Endothelial cell of umbilical vein (primary cell): ENCODE measurements at regions of chr14 and their contacts with region 1.

Region 1: DNA sequence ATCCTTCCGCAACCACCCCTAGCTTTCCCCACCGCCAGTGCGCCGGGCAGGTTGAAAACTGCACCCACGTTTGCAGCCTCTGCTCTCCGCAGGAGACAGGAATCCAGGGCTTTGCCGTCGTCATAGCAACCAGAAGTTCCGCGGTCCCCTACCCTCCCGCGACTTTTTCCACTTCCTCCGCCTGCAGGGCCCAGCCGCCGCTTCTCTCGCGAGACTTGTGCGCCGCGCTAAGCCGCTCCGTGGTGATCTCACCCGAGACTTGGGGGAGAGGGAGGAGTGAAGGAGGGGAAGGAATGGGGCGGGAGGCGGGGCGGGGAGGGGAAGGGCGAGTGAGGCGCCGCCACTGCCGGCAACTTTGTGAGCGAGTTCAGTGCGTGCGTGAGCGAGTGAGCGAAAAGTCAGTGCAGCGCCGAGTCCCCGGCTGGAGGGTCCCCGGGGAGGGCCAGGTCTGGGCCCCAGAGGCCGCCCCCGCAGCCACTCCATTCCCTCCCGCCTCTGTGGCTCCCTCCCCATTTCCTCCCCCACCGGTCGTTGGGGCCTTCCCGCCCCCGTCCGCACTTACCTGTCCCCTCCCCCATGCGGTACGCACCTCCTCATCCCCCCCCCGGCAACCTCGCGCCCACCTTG is 413.0 kb downstream of the PCNX1 start:
- DNase-seq: peak; percentile 99
- H3K4me3 ChIP-seq: peak within 1 kb of the TSS; percentile 78 to 94 (median 89)
- H3K27ac ChIP-seq: peak within 1 kb of the TSS; percentile 74
- H3K4me1 ChIP-seq: peaks cover 11% of the 10 kb centered on the region
- H3K27me3 ChIP-seq: no peaks in the 10 kb centered on the region
- CTCF ChIP-seq: no peak
- POLR2A ChIP-seq: peak; percentile 91

Region 2: DNA sequence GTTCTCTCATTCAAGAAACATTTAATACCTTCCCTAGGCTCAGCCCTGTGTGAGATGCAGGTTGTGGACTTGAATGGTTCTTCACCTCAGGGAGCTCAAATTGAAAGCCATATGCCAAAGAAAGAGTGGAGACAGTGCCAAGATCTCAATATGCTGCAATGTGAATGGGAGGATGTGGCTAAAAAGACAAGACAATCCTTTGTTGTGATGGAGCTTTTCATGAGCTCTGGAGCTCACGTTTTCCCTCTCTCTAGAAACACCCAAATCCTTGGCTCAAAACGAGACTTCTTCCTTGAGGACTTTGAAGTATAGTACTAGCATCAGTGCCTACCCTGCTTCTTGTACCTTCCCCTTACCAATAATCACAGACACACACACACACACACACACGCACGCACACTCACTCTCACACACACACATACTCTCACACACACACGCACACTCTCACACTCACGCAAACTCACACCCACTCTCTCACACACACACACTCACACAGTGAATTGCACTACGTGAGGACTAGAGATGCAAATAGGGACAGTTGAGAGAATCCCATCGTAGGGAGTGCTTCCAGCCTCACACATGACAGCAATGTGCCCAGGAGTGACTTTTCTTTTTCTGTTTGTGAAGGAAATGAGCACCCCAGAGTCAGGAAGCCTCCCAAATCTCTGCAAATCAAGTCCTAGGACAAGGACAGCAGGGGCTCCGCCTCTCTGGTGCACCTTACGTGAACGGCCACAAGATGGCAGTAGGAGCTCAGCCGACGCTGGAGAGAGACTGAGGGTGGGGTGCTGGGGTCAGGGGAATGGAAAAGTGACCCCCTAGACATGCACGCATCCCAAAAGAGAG is 181.5 kb before region 1 on chr14:
- CTCF ChIA-PET with region 1: interaction called, 14 read pairs
- POLR2A ChIA-PET with region 1: no interaction called
- dilution Hi-C with region 1: no loop called
- intact Hi-C with region 1: loop called (anchors 1 kb)
- DNase-seq: peak; percentile 46
- H3K4me3 ChIP-seq: no peak overlapping the region
- H3K27ac ChIP-seq: no peak overlapping the region
- H3K4me1 ChIP-seq: peaks cover 15% of the 10 kb centered on the region
- H3K27me3 ChIP-seq: no peaks in the 10 kb centered on the region
- CTCF ChIP-seq: peak; percentile 85 to 90
- POLR2A ChIP-seq: no peak

Region 3: DNA sequence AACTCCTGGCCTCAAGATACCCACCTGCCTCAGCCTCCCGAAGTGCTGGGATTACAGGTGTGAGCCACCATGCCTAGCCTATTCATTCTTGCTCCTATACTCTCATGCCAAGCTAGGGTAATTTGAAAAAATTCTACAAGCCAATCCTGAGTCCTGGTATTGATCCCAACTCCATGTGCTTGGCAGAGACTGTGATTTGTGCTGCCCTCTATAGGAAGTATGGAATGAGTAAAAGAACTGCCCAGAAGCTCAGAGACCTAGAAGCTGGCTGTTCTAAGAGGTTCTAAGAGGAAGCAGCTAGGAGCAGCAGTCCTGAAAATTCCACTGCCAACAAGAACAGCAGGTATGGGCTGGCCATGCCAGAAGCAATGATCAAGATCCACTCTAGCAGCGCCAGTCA is 10.5 kb before region 1 on chr14:
- CTCF ChIA-PET with region 1: interaction called, 11 read pairs
- POLR2A ChIA-PET with region 1: no interaction called
- dilution Hi-C with region 1: no loop called
- intact Hi-C with region 1: no loop called
- DNase-seq: no peak
- H3K4me3 ChIP-seq: no peak overlapping the region
- H3K27ac ChIP-seq: no peak overlapping the region
- H3K4me1 ChIP-seq: no peaks in the 10 kb centered on the region
- H3K27me3 ChIP-seq: peaks cover 6 to 14% of the 10 kb centered on the region in 2 experiments
- CTCF ChIP-seq: no peak
- POLR2A ChIP-seq: no peak

Region 4: DNA sequence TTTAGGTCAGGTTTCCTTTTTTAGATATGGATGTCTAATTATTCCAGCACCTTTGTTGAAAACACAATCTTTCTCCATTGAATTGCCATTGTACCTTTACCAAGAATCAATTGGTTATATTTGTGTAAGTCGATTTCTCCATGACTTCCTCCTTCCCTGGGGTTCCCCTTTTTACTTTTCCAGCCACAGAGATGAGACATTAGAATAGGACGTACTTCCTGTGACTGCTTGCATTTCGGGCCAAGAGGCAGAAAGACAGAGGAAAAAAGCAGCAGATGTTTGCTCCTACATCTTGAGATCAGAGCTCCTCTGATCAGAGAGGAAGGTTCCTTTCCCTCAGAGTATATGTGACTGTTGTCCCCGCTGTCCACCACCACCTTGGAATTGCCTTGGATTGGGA is 158.3 kb after region 1 on chr14:
- CTCF ChIA-PET with region 1: interaction called, 3 read pairs
- POLR2A ChIA-PET with region 1: no interaction called
- dilution Hi-C with region 1: no loop called
- intact Hi-C with region 1: loop called (anchors 10 kb)
- DNase-seq: no peak
- H3K4me3 ChIP-seq: no peak overlapping the region
- H3K27ac ChIP-seq: no peak overlapping the region
- H3K4me1 ChIP-seq: no peaks in the 10 kb centered on the region
- H3K27me3 ChIP-seq: no peaks in the 10 kb centered on the region
- CTCF ChIP-seq: no peak
- POLR2A ChIP-seq: no peak

Region 5: GRCh38 chr14:71651228-71651627 is 331.0 kb after region 1 on chr14:
- CTCF ChIA-PET with region 1: no interaction called
- POLR2A ChIA-PET with region 1: no interaction called
- dilution Hi-C with region 1: no loop called
- intact Hi-C with region 1: loop called (anchors 1 kb)
- DNase-seq: peak; percentile 96
- H3K4me3 ChIP-seq: peak overlapping the region in 1 of 3 experiments; percentile 29
- H3K27ac ChIP-seq: peak overlapping the region; percentile 85
- H3K4me1 ChIP-seq: peaks cover 23% of the 10 kb centered on the region
- H3K27me3 ChIP-seq: no peaks in the 10 kb centered on the region
- CTCF ChIP-seq: no peak
- POLR2A ChIP-seq: no peak

Region 6: GRCh38 chr14:71753126-71753830 is 433.1 kb after region 1 on chr14:
- CTCF ChIA-PET with region 1: interaction called, 37 read pairs
- POLR2A ChIA-PET with region 1: no interaction called
- dilution Hi-C with region 1: no loop called
- intact Hi-C with region 1: loop called (anchors 1 kb)
- DNase-seq: peak; percentile 89
- H3K4me3 ChIP-seq: no peak overlapping the region
- H3K27ac ChIP-seq: no peak overlapping the region
- H3K4me1 ChIP-seq: peaks cover 6% of the 10 kb centered on the region
- H3K27me3 ChIP-seq: no peaks in the 10 kb centered on the region
- CTCF ChIP-seq: peak; percentile 91 to 92
- POLR2A ChIP-seq: no peak